Dendritic cell treated with granulocyte-macrophage colony-stimulating factor and Interleukin-4, amounts not matched to agents 40 ng/mL and 50 ng/mL, for 4 days (primary cell): ENCODE measurements at regions of chr19 and their contacts with region 1.

Region 1: DNA sequence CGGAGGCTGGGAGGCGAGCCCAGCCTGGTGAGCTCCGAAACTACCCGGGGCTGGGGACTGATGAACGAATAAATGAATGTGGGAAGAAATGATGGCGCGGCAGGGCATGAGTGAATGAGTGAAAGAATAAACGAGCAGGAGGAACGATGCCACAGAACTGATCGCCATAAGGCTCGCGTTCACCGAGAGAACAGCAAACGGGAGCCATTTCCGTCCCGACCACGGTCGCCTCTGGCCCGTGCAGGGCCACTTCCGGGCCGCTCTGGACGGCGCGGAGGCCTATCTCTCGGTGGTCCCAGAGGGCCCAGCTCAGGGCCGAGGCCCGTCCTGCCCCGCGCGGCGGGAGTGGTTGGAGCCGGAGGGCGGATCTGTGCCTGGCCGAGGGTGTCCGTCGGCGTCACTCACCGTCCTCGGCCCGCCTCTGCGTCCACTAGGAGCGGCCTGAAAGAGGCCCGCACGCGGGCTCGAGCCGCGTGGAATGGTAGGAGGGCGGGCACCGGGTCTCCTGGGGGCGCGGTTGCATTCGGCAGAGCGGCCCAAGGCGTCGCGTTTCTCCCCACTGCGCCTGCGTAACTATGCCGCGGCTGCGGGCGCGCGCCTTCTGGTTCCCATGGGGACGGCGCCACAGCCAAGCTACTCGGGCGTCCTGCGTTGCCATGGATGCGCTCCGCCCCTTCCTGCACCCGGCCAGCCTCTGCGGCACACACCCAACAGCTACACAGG is at the start of gene ZNF497:
- H3K4me3 Mint-ChIP-seq: peak within 1 kb of the TSS; percentile 96
- H3K27ac Mint-ChIP-seq: peak within 1 kb of the TSS; percentile 98
- H3K4me1 Mint-ChIP-seq: peaks cover 24% of the 10 kb centered on the region
- H3K27me3 Mint-ChIP-seq: peaks cover 12% of the 10 kb centered on the region

Region 2: GRCh38 chr19:58400916-58401839 is 38.7 kb after region 1 on chr19:
- intact Hi-C with region 1: loop called (anchors 2 kb)
- H3K4me3 Mint-ChIP-seq: peak overlapping the region; percentile 85
- H3K27ac Mint-ChIP-seq: peak overlapping the region; percentile 80
- H3K4me1 Mint-ChIP-seq: peaks cover 28% of the 10 kb centered on the region
- H3K27me3 Mint-ChIP-seq: peaks cover 31% of the 10 kb centered on the region